ENCODE measurements at regions of chr3 and their contacts with region 1.

Region 1: GRCh38 chr3:190497811-190498210 is 16.1 kb upstream of the IL1RAP start:
- DNase-seq: no peak
- H3K4me3 ChIP-seq: no peak overlapping the region
- CTCF ChIP-seq: no peak

Region 2: GRCh38 chr3:190513409-190514162 is 15.8 kb after region 1 on chr3 and contains the start of gene IL1RAP:
- CTCF ChIA-PET with region 1: interaction called, 12 read pairs
- POLR2A ChIA-PET with region 1: no interaction called
- DNase-seq: peak; percentile 55
- H3K4me3 ChIP-seq: peak within 1 kb of the TSS; percentile 87
- CTCF ChIP-seq: peak; percentile 20

Region 3: GRCh38 chr3:191316876-191317603 is 819.2 kb after region 1 on chr3:
- CTCF ChIA-PET with region 1: no interaction called
- POLR2A ChIA-PET with region 1: no interaction called
- DNase-seq: no peak
- H3K4me3 ChIP-seq: no peak overlapping the region
- CTCF ChIP-seq: no peak